Panc1 (cell line): ENCODE measurements at regions of chr11 and their contacts with region 1.

Region 1: GRCh38 chr11:115317277-115318185 is 186.7 kb downstream of the CADM1 start:
- DNase-seq: no peak
- ATAC-seq: no peak
- H3K4me3 ChIP-seq: no peak overlapping the region
- H3K27ac ChIP-seq: no peak overlapping the region
- H3K4me1 ChIP-seq: no peaks in the 10 kb centered on the region
- H3K27me3 ChIP-seq: no peaks in the 10 kb centered on the region; the same call in 1 of the 2 replicates
- CTCF ChIP-seq: no peak

Region 2: DNA sequence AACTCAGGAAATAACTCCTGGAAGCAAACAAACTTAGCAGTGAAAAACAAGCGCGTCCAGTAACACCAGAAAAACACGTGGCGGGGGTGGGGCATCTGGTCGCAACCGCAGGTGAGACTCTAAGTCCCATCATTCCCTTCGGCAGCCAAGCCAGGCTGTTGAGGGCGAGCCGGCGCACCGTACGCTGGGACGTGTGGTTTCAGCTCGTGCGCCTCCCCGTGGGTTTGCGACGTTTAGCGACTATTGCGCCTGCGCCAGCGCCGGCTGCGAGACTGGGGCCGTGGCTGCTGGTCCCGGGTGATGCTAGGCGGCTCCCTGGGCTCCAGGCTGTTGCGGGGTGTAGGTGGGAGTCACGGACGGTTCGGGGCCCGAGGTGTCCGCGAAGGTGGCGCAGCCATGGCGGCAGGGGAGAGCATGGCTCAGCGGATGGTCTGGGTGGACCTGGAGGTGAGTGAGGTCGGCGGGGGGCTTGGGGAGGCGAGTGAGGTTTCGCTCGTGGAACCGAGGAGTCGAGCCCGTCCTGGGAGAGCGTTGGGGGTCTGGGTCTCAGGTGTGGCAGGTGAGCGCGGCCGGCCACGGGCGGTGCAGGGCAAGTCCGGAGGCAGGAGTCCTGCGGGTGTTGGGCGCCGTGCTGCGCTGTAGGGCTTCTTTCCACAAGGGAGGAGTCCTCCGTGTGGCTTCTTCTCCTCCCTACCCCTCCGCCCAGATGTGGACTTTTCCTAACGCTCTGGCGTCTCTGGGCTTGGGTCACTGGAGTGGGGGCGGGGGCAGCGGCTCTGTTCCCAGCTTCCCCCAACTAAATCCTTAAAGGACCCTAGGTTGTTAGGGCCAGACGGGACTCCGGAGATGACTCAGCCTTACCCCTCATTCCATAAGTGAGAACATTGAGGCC is 878.1 kb before region 1 on chr11 and contains the start of gene REXO2:
- CTCF ChIA-PET with region 1: interaction called, 10 read pairs
- POLR2A ChIA-PET with region 1: no interaction called
- in situ Hi-C with region 1: no loop called
- intact Hi-C with region 1: no loop called
- DNase-seq: peak; percentile 80
- ATAC-seq: peak; percentile 99
- H3K4me3 ChIP-seq: peak within 1 kb of the TSS; percentile 86 to 91
- H3K27ac ChIP-seq: peak within 1 kb of the TSS; percentile 88
- H3K4me1 ChIP-seq: peaks cover 20% of the 10 kb centered on the region
- H3K27me3 ChIP-seq: no peaks in the 10 kb centered on the region
- CTCF ChIP-seq: peak; percentile 21; the same call in 1 of the 2 replicates
- total RNA-seq, gene REXO2: 111 TPM

Region 3: GRCh38 chr11:114774599-114775361 is 542.8 kb before region 1 on chr11:
- CTCF ChIA-PET with region 1: no interaction called
- POLR2A ChIA-PET with region 1: no interaction called
- in situ Hi-C with region 1: no loop called
- intact Hi-C with region 1: loop called (anchors 5 kb)
- DNase-seq: no peak
- ATAC-seq: peak; percentile 88
- H3K4me3 ChIP-seq: no peak overlapping the region
- H3K27ac ChIP-seq: no peak overlapping the region
- H3K4me1 ChIP-seq: no peaks in the 10 kb centered on the region
- H3K27me3 ChIP-seq: no peaks in the 10 kb centered on the region
- CTCF ChIP-seq: peak; percentile 85